RWPE1 (cell line): ENCODE measurements at regions of chr12 and their contacts with region 1.

Region 1: DNA sequence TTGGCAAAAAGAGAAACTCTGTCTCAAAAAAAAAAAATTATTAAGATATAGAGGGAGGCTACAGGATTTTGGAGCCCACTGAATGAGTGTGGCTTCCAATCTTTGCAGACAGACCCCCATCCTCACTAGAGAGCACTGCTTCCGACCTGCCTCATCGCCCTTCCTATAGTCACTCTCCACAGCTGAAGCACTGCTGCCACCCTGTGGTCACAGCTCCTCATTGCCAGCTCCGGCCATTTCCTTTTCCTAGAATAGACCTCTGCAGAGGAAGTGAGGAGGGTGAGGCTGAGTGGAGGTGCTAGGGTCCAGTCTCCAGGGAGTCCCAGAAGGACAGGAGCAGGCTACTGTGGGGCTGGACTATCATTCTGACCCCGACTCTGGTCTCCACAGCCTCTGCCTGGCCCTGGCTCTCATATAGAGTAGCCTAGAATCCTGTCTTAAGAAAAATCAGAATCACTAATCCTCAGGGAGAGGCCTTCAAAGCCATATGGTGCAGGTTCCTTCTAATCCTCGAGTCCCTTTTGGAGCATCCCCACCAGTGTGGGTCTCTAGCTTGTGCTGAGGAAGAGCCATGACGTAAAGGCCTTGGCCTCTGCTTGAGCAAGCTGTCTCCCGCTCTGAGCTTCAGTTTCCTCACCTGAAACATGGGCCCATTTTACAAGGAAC is 1.4 kb upstream of the NPFF start:
- DNase-seq: peak; percentile 77
- H3K27ac ChIP-seq: peak overlapping the region; percentile 62
- CTCF ChIP-seq: peak; percentile 93

Region 2: GRCh38 chr12:53476769-53477209 is 31.9 kb before region 1 on chr12:
- CTCF ChIA-PET with region 1: interaction called, 10 read pairs
- POLR2A ChIA-PET with region 1: interaction called, 3 read pairs
- DNase-seq: no peak
- H3K27ac ChIP-seq: no peak overlapping the region
- CTCF ChIP-seq: peak; percentile 35; the same call in 1 of the 2 replicates